ENCODE measurements at regions of chr3 and their contacts with region 1.

Region 1: GRCh38 chr3:129428376-129429079 is at the start of gene EFCAB12:
- DNase-seq: peak; percentile 95
- ATAC-seq: peak; percentile 96
- H3K4me3 Mint-ChIP-seq: peak within 1 kb of the TSS; percentile 59
- H3K27ac Mint-ChIP-seq: peak within 1 kb of the TSS; percentile 63
- H3K4me1 Mint-ChIP-seq: peaks cover 43% of the 10 kb centered on the region
- H3K27me3 Mint-ChIP-seq: no peaks in the 10 kb centered on the region
- total RNA-seq, gene EFCAB12: 0.56 to 0.73 TPM

Region 2: DNA sequence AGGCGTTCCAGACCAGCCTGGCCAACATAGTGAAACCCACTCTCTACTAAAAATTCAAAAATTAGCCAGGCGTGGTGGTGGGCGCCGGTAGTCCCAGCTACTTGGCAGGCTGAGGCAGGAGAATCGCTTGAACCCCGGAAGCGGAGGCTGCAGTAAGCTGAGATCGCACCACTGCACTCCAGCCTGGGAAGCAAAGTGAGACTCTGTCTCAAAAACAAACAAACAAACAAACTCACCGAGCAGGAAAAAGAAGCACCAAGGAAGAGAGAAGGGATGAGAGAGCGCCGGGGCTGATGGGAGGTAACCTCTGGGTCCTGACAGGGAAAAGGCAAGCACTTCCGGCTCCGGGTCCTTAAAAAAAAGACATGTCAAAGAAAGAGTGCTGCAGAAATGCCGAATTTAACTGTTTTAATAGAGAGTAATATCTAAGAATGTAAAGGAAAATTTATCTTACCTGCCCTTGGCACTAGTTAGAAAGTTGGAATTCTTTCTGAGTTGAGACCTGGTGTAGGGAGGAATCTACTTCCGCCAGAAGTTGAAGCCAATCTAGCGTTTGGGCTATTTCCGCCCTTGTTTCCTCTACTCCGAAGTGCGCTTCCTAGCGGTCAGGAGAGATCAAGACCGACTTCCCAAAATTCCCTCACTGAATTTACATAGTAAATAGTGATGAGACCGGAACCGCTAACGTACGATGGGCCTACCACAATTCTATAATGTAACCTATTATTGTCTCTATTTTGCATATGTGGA is 29.2 kb before region 1 on chr3:
- CTCF ChIA-PET with region 1: interaction called, 12 read pairs
- POLR2A ChIA-PET with region 1: interaction called, 5 read pairs
- intact Hi-C with region 1: loop called in 1 of 2 experiments (anchors 1 kb)
- DNase-seq: peak; percentile 90
- ATAC-seq: peak; percentile 82
- H3K4me3 Mint-ChIP-seq: peak overlapping the region; percentile 99
- H3K27ac Mint-ChIP-seq: peak overlapping the region; percentile 98
- H3K4me1 Mint-ChIP-seq: peaks cover 29% of the 10 kb centered on the region
- H3K27me3 Mint-ChIP-seq: no peaks in the 10 kb centered on the region

Region 3: DNA sequence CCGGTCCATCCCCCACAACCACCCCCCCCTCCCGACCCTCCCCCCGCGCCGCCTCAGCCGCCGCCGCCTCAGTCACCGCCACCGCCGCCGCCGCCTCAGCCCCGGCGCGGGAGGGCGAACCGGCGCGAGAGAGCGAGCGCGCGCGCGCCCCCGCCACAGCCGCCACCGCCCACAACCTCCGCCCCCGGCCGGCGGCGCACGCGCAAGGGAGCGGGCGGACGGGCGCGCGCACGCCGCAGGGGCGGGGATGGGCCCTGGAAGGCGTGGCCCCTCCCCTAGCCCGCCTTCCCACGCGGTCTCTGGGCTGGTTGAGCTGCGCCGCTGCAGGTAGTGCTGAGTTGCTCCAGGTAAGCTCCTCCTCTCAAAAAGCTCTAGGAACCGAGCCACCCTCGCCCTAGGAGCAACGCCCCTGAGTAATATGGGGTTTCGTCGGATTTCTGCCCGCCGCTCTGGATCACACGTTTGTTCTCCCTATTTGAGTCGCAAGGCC is 465.1 kb after region 1 on chr3 and contains the start of gene TMCC1:
- CTCF ChIA-PET with region 1: no interaction called
- POLR2A ChIA-PET with region 1: no interaction called
- intact Hi-C with region 1: loop called in 1 of 2 experiments (anchors 1 kb)
- DNase-seq: peak; percentile 92
- ATAC-seq: peak; percentile 92
- H3K4me3 Mint-ChIP-seq: peak within 1 kb of the TSS; percentile 86
- H3K27ac Mint-ChIP-seq: peak within 1 kb of the TSS; percentile 85
- H3K4me1 Mint-ChIP-seq: peaks cover 36% of the 10 kb centered on the region
- H3K27me3 Mint-ChIP-seq: no peaks in the 10 kb centered on the region
- total RNA-seq, gene TMCC1: 14.8 to 17.3 TPM